H1 (cell line): ENCODE measurements at regions of chr19 and their contacts with region 1.

Region 1: DNA sequence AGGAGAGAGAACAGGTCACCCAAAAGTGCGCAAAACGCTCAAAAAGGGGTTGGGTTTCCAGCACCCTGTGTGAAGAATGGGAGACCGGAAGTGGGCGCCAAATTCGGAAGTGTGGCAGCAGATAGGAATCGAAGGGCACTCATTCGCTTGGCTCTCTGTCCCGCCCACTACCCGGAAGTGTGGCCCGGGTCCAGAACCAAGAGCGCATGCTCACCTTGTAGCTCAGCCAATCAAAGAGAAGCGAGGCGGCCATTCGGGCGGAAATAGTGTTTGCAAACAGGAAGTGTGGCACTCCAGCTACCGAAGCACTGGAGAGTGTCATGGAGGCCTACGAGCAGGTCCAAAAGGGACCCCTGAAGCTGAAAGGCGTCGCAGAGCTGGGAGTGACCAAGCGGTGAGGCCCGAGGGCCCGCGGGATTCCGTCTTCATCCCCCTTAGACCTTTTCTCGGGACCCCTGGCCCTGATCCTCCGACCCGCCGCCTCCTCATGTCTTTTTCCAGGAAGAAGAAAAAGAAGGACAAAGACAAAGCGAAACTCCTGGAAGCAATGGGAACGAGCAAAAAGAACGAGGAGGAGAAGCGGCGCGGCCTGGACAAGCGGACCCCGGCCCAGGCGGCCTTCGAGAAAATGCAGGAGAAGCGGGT is at the start of gene FAM32A:
- DNase-seq: peak; percentile 92 to 98
- H3K4me3 ChIP-seq: peak within 1 kb of the TSS; percentile 71 to 96 (median 92)
- H3K27ac ChIP-seq: peak within 1 kb of the TSS; percentile 80
- H3K4me1 ChIP-seq: peaks cover 0 to 2% (median 0%) of the 10 kb centered on the region in 4 experiments; a peak in 1 of 7 replicates
- H3K27me3 ChIP-seq: no peaks in the 10 kb centered on the region
- CTCF ChIP-seq: peak in 2 of 3 experiments; percentile 20 to 30; a peak in 2 of 4 replicates
- EP300 ChIP-seq: no peak
- POLR2A ChIP-seq: peak; percentile 91 to 95
- RAD21 ChIP-seq: no peak
- total RNA-seq, gene FAM32A: 75.6 and 78.9 TPM in 2 replicates

Region 2: DNA sequence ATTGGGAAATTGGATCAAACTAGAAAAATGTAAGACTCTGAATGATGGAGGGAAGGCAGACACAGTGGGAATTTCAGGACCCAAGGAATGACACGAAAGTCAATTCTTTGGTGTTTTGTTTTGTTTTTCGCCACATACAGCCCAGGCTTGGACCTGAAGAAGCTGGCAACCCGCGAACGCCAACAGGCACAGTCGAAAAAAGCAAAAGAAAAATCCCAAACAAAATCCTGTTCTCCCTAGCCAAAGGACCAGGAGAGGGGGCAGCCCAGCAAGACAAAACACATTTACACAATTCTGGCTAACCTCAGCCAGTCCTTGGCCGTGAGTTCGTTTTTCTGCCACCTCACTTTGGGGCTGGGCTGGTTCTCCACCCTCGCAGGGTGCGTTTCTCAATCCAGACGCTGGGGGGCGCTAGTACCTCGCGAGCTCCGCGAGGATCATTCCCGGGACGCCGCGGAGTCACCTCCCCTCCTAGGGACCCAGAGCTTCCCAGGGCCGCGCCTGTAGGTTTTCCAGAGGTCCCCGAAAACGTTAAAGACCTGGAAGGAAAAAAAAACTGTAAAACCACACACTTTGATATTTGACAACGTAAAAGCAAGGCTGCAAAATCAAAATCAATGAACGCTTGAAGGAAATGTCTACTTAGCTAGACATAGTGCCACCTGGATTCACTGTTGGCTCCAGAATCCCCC is 143.8 kb before region 1 on chr19:
- CTCF ChIA-PET with region 1: interaction called, 23 read pairs
- POLR2A ChIA-PET with region 1: interaction called, 3 read pairs
- DNase-seq: peak; percentile 50 to 99
- H3K4me3 ChIP-seq: peak overlapping the region in 1 of 4 experiments; percentile 13; a peak in 1 of 8 replicates
- H3K27ac ChIP-seq: no peak overlapping the region
- H3K4me1 ChIP-seq: no peaks in the 10 kb centered on the region
- H3K27me3 ChIP-seq: no peaks in the 10 kb centered on the region
- CTCF ChIP-seq: peak; percentile 91 to 93 (median 92)
- EP300 ChIP-seq: no peak
- POLR2A ChIP-seq: no peak
- RAD21 ChIP-seq: peak; percentile 93 to 95

Region 3: GRCh38 chr19:16197622-16198369 is 12.6 kb after region 1 on chr19 and contains the start of gene AP1M1:
- CTCF ChIA-PET with region 1: interaction called, 15 read pairs
- POLR2A ChIA-PET with region 1: interaction called, 25 read pairs
- DNase-seq: peak; percentile 97 to 99
- H3K4me3 ChIP-seq: peak within 1 kb of the TSS; percentile 73 to 92 (median 81)
- H3K27ac ChIP-seq: peak within 1 kb of the TSS; percentile 4; the same call in 1 of the 2 replicates
- H3K4me1 ChIP-seq: no peaks in the 10 kb centered on the region; a peak in 1 of 7 replicates
- H3K27me3 ChIP-seq: no peaks in the 10 kb centered on the region
- CTCF ChIP-seq: no peak
- EP300 ChIP-seq: no peak
- POLR2A ChIP-seq: peak in 1 of 2 experiments; percentile 55; a peak in 1 of 3 replicates
- RAD21 ChIP-seq: no peak
- total RNA-seq, gene AP1M1: 37.2 and 37.5 TPM in 2 replicates